Naive thymus-derived CD4-positive, alpha-beta T cell (primary cell): ENCODE measurements at regions of chr10 and their contacts with region 1.

Region 1: GRCh38 chr10:9010093-9010492 is 955.6 kb downstream of the GATA3 start:
- DNase-seq: peak in 7 of 9 donors; percentile 62 to 87 (median 83)
- ATAC-seq: peak; percentile 94
- H3K4me3 ChIP-seq: no peak overlapping the region
- H3K4me3 Mint-ChIP-seq: peak overlapping the region in 9 of 10 donors; percentile 26 to 87 (median 65)
- H3K27ac ChIP-seq: no peak overlapping the region
- H3K27ac Mint-ChIP-seq: peak overlapping the region in 8 of 9 donors; percentile 72 to 96 (median 86)
- H3K4me1 ChIP-seq: peaks cover 5 to 28% of the 10 kb centered on the region in 2 donors
- H3K4me1 Mint-ChIP-seq: peaks cover 11 to 71% (median 55%) of the 10 kb centered on the region in 7 donors
- H3K27me3 ChIP-seq: no peaks in the 10 kb centered on the region
- H3K27me3 Mint-ChIP-seq: no peaks in the 10 kb centered on the region

Region 2: GRCh38 chr10:8336629-8337331 is 673.3 kb before region 1 on chr10:
- CTCF ChIA-PET with region 1: no interaction called
- POLR2A ChIA-PET with region 1: no interaction called
- intact Hi-C with region 1: no loop called
- DNase-seq: no peak
- ATAC-seq: no peak
- H3K4me3 ChIP-seq: no peak overlapping the region
- H3K4me3 Mint-ChIP-seq: no peak overlapping the region
- H3K27ac ChIP-seq: no peak overlapping the region
- H3K27ac Mint-ChIP-seq: no peak overlapping the region
- H3K4me1 ChIP-seq: peaks cover 5 to 11% of the 10 kb centered on the region in 2 donors
- H3K4me1 Mint-ChIP-seq: peaks cover 4 to 23% (median 20%) of the 10 kb centered on the region in 7 donors
- H3K27me3 ChIP-seq: no peaks in the 10 kb centered on the region
- H3K27me3 Mint-ChIP-seq: peaks cover 0 to 6% (median 0%) of the 10 kb centered on the region in 5 donors

Region 3: GRCh38 chr10:9024210-9024609 is 14.1 kb after region 1 on chr10:
- CTCF ChIA-PET with region 1: no interaction called
- POLR2A ChIA-PET with region 1: interaction called, 3 read pairs
- intact Hi-C with region 1: loop called in 1 of 2 experiments (anchors 2 kb)
- DNase-seq: no peak
- ATAC-seq: no peak
- H3K4me3 ChIP-seq: no peak overlapping the region
- H3K4me3 Mint-ChIP-seq: no peak overlapping the region
- H3K27ac ChIP-seq: no peak overlapping the region
- H3K27ac Mint-ChIP-seq: peak overlapping the region in 1 of 9 donors; percentile 28
- H3K4me1 ChIP-seq: peaks cover 0 to 4% of the 10 kb centered on the region in 2 donors
- H3K4me1 Mint-ChIP-seq: peaks cover 0 to 9% (median 4%) of the 10 kb centered on the region in 7 donors
- H3K27me3 ChIP-seq: no peaks in the 10 kb centered on the region
- H3K27me3 Mint-ChIP-seq: peaks cover 5 to 10% (median 8%) of the 10 kb centered on the region in 5 donors

Region 4: DNA sequence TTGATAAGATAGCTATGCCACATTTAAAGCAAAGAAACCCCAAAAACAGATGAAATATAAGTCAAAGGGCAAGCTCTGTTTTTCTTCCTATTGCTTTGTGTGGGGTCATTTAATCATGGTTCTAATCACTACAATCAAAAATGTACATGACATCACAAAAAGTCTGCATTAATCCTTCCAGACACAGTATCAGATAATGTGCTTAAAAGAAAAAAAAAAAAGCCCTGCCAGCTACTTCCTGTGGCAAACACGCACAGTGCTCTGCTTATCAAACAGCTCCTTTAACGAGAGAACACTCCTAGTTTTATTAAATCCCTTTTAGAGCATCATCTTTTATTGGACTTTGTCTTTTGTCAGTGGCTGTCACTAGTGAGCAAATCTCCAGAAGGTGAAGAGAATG is 50.2 kb after region 1 on chr10:
- CTCF ChIA-PET with region 1: no interaction called
- POLR2A ChIA-PET with region 1: interaction called, 4 read pairs
- intact Hi-C with region 1: loop called in 1 of 2 experiments (anchors 2 kb)
- DNase-seq: peak in 5 of 9 donors; percentile 18 to 35 (median 23)
- ATAC-seq: peak; percentile 60
- H3K4me3 ChIP-seq: peak overlapping the region; percentile 7
- H3K4me3 Mint-ChIP-seq: peak overlapping the region in 9 of 10 donors; percentile 47 to 79 (median 61)
- H3K27ac ChIP-seq: no peak overlapping the region
- H3K27ac Mint-ChIP-seq: peak overlapping the region in 3 of 9 donors; percentile 23 to 76 (median 53)
- H3K4me1 ChIP-seq: peaks cover 0 to 5% of the 10 kb centered on the region in 2 donors
- H3K4me1 Mint-ChIP-seq: peaks cover 0 to 26% (median 20%) of the 10 kb centered on the region in 7 donors
- H3K27me3 ChIP-seq: no peaks in the 10 kb centered on the region
- H3K27me3 Mint-ChIP-seq: peaks cover 0 to 4% (median 0%) of the 10 kb centered on the region in 5 donors